ENCODE measurements at regions of chr11 and their contacts with region 1.

Region 1: GRCh38 chr11:124875943-124876817 is 10.9 kb downstream of the ROBO3 start:
- DNase-seq: peak; percentile 67 to 90 (median 82)
- H3K4me3 ChIP-seq: peak overlapping the region; percentile 47 to 96 (median 71)
- H3K27ac ChIP-seq: peak overlapping the region; percentile 57 to 97 (median 87)
- H3K27me3 ChIP-seq: peaks cover 0 to 7% (median 0%) of the 10 kb centered on the region in 45 donors
- CTCF ChIP-seq: peak in 55 of 56 donors; percentile 58 to 95 (median 82)

Region 2: DNA sequence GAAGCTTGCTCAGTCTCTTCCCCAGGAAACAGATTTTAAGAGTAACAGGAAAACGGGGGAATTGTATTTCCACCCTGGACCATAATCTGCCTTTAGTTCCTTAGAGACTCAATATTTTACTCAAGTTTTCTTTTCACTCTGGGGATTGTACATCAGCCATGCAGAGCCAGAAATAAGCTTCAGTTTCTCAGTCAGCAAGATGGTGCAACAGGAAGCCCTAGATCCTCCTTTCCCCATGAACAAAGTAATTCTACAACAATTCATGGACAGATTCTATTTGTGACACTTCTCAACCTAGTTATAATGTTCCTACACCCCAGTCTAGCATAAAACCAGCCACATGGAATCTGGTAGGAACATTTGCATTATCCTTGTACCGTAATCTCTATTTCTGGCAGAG is 516.6 kb before region 1 on chr11:
- intact Hi-C with region 1: no loop called
- DNase-seq: no peak
- H3K4me3 ChIP-seq: no peak overlapping the region
- H3K27ac ChIP-seq: peak overlapping the region in 4 of 59 donors; percentile 4 to 27 (median 14)
- H3K27me3 ChIP-seq: peaks cover 0 to 2% (median 0%) of the 10 kb centered on the region in 45 donors
- CTCF ChIP-seq: no peak

Region 3: DNA sequence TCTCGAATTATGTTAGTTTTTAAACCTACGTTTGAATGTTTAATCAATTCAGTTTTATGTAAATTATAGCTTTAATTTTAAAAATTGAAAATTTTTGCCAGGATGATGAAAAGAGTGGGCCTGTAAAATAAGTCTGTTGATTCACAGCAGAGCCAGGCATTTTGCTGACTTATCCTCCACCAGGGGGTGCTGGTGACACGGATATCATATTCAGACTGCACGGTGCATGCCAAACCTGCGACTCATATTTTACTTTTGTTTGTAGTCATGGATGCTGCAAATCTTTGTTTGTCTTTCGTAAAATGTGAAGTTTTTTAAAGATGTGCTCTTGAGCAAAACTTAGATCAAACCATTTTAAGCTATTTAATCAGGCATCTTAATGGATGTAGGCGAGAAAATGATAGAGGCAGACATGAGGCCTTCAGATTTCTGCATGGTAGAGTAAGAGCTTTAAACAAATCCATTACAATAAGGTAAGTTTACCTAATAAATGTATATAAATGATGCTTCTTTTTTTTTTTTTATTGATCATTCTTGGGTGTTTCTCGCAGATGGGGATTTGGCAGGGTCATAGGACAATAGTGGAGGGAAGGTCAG is 473.8 kb before region 1 on chr11:
- intact Hi-C with region 1: loop called in 1 of 2 experiments (anchors 10 kb)
- DNase-seq: peak; percentile 8 to 88 (median 63)
- H3K4me3 ChIP-seq: no peak overlapping the region
- H3K27ac ChIP-seq: no peak overlapping the region
- H3K27me3 ChIP-seq: peaks cover 0 to 4% (median 0%) of the 10 kb centered on the region in 45 donors
- CTCF ChIP-seq: peak; percentile 58 to 84 (median 72)

Region 4: DNA sequence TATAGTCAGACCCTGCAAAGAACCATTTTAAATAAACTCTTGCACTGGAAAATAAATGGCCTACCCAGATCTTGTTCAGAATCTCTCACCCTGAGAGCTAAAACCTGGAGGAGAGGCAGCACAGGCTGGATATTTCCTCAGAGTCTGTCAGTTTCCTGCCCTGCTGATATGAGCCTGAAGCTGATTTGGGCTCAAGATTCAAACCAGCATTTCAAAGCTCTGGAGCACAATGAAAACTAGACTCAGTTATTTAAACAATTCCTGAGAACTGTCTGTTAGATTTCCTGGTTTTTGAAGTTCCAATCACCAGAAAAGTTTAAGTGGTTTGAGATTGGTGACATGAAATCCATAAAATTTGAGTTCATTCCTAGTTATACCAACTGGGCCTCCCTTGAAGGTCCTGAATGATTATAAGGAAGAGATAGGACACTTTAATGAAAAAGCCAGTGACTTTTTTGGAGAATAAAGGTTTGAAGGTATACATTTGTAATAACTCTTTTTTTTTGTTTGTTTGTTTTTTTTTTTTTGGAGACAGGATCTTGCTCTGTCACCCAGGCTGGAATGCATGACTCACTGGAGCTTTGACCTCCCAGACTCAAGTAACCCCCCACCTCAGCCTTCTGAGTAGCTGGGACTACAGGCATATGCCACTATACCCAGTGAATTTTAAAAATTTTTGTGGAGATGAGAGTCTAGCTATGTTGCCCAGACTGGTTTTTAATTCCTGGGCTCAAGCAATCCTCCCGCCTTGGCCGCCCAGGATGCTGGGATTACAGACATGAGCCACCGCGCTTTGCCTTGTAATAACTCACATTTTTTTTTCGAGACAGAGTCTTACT is 106.2 kb before region 1 on chr11:
- intact Hi-C with region 1: no loop called
- DNase-seq: no peak
- H3K4me3 ChIP-seq: no peak overlapping the region
- H3K27ac ChIP-seq: peak overlapping the region in 1 of 59 donors; percentile 22
- H3K27me3 ChIP-seq: no peaks in the 10 kb centered on the region
- CTCF ChIP-seq: no peak

Region 5: GRCh38 chr11:124920870-124921609 is 44.9 kb after region 1 on chr11:
- intact Hi-C with region 1: loop called (anchors 5 to 10 kb)
- DNase-seq: peak in 3 of 10 donors; percentile 28 to 58 (median 46)
- H3K4me3 ChIP-seq: peak overlapping the region in 58 of 59 donors; percentile 17 to 61 (median 45)
- H3K27ac ChIP-seq: peak overlapping the region in 55 of 59 donors; percentile 1 to 100 (median 95)
- H3K27me3 ChIP-seq: no peaks in the 10 kb centered on the region
- CTCF ChIP-seq: peak in 7 of 56 donors; percentile 4 to 25 (median 12)

Region 6: GRCh38 chr11:124943254-124943616 is 67.1 kb after region 1 on chr11:
- intact Hi-C with region 1: loop called (anchors 5 kb)
- DNase-seq: peak in 9 of 10 donors; percentile 62 to 85 (median 77)
- H3K4me3 ChIP-seq: peak overlapping the region in 32 of 59 donors; percentile 6 to 52 (median 28)
- H3K27ac ChIP-seq: peak overlapping the region; percentile 83 to 100 (median 97)
- H3K27me3 ChIP-seq: no peaks in the 10 kb centered on the region
- CTCF ChIP-seq: peak in 52 of 56 donors; percentile 12 to 72 (median 46)